Right ventricle myocardium inferior (tissue), 1 donor: ENCODE measurements at regions of chr13 and their contacts with region 1.

Region 1: DNA sequence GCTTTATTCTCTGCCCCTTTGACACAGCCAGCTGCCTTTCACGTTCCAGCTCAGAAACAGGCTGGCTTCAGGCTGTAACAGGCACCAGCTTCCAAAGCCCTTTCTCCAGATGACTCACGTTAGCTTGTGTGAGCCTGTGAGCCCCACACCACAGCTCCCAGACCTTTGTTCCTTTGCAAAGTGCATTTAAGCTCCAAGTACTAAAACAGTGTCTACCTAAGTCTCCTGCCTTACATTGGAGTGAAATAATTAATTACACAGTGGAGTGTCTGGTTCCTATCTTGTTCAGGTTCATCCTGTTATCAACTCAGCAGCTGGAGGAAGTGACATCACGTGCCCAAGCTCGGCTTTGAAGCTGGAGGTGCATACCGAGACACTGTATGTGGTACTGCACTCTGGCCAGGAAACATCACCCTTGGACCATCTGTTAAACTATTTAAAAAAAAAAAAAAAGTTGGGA is 475.8 kb downstream of the FOXO1 start:
- DNase-seq: no peak
- ATAC-seq: peak; percentile 50

Region 2: DNA sequence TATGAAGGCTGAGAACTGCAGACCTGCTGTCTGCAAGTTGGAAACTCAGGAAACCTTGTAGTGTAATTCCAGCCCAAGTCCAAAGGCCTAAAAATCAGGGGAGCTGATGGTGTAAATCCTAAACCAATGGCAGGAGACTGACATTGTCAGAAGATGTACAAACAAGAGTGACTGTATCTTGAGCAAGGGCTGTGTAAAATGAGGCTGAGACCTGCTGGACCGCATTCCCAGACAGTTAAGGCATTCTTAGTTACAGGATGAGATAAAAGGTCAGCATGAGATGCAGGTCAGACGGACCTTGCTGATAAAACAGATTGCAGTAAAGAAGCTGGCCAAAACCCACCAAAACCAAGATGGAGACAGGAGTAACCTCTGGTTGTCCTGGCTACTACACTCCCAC is 387.5 kb before region 1 on chr13:
- intact Hi-C with region 1: no loop called
- DNase-seq: no peak
- ATAC-seq: no peak

Region 3: GRCh38 chr13:40149611-40150274 is 40.9 kb before region 1 on chr13:
- intact Hi-C with region 1: loop called (anchors 5 kb)
- DNase-seq: no peak
- ATAC-seq: peak; percentile 55

Region 4: DNA sequence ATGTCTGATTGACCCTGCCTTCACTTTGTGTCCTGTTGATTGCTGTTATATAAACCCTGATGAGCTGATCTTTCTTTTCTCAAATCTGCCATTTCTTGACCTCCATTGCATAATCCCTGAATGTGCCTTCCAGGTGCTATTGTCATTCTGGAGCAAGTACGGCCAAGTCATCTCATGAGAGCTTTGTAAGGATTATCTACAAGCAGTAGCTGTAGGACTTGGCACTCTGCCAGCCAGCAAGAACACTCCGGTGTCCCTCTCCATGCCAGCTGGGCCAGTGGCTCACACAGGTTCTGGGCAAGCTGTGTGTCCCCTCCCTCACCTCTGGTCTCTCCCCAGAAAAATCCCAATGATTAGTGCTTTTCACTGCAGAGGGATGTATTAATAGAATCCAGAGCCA is 127.7 kb after region 1 on chr13:
- intact Hi-C with region 1: loop called (anchors 2 kb)
- DNase-seq: peak; percentile 70
- ATAC-seq: peak; percentile 50

Region 5: DNA sequence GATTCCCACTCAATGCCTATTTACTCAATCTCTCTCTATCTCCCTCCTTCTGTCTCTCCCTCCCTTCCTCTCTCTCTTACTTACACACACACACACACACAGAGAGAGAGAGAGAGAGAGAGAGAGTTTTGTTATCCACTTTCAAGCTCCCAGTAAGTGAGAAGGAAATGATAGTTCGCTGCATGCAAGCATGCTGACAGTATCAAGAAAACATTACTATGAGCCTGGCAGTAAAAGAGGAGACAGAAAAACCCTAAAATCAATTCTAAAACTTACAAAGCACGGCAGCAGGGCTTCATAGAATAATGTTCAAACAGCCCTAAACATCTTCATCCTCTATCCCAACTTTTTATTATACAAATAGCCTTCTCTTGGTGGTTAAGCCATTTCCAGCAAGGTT is 303.8 kb after region 1 on chr13:
- intact Hi-C with region 1: no loop called
- DNase-seq: no peak
- ATAC-seq: peak; percentile 32